Posterior cingulate gyrus (tissue), 11 donors: ENCODE measurements at regions of chr10 and their contacts with region 1.

Region 1: DNA sequence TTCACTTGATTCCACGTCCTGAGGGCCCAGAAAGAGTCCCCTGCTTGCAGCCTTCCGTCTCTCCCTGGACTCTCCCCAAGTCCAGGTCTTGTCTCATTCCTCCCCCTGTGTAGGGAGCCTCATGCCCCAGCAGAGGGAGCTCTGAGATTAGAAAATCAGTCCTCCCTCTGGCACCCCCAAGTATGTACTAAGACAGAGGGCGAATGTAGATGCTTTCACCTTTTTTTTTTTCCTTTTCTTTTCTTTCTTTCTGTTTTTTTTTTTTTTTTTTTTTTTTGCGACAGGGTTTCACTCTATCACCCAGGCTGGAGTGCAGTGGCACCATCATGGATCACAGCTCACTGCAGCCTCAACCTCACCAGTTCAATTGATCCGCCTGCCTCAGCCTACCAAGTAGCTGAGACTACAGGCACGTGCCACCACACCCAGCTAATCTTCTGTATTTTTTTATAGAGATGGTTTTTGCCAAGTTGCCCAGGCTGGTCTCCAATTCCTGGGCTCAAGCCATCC is 10.3 kb downstream of the SFXN3 start:
- DNase-seq: peak; percentile 65 to 96 (median 83)

Region 2: GRCh38 chr10:101060036-101060950 is 19.0 kb after region 1 on chr10:
- intact Hi-C with region 1: loop called (anchors 2 kb)
- DNase-seq: peak; percentile 68 to 95 (median 86)